Common myeloid progenitor, CD34-positive (primary cell): ENCODE measurements at regions of chr2 and their contacts with region 1.

Region 1: DNA sequence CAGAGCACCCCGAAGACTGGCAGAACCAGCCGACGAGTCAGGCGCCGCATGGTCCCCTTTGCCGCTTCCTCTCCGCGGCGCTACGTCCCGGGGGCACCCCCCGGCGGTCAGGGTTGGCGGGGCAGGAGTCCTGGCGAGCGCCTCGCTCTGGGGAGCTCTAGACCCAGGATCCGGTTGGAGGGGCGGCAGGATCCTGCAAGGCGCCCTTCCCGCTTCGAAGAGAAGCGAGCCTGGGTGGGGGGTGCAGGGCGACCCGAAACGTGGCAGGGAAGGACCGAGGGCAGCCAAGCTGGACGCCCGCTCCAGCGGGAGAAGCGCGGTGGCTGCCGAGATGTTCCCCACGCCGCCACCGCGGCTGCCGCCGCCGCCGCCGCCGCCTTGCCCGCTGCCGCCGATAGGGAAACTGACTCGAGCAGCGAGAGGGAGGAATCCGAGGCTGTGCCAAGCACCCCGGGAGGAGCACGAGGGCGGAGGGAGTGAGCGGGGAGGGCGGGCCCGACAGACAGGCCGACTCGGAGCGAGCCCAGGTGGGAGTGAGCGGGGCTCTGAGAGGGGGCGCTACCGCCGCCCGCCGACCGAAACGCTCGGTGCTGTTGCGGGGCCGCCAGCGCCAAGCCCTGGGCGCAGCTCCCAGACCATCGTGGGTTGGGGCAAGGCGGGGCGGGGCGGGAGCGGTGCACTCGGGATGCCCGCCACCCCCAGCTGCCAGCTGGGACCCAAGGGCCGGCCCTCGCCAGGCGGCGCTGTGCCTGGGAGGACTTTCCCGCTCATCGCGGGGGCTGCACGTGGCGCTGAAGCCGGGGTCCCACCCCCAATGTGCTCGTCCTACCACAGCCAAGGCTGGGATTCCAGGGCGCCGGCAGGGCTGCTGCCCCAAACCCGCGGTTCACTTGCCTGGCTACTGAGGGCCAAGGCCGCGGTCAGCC is at the start of gene GALNT14:
- DNase-seq: peak; percentile 66 to 85 (median 76)
- H3K4me3 ChIP-seq: peak within 1 kb of the TSS; percentile 44 to 81 (median 71)
- H3K27ac ChIP-seq: no peak within 1 kb of the TSS
- H3K4me1 ChIP-seq: peaks cover 4 to 25% (median 22%) of the 10 kb centered on the region in 4 experiments
- H3K27me3 ChIP-seq: peaks cover 0 to 23% (median 0%) of the 10 kb centered on the region in 5 experiments

Region 2: GRCh38 chr2:30736461-30737325 is 401.6 kb before region 1 on chr2:
- CTCF ChIA-PET with region 1: no interaction called
- POLR2A ChIA-PET with region 1: no interaction called
- DNase-seq: no peak
- H3K4me3 ChIP-seq: no peak overlapping the region
- H3K27ac ChIP-seq: no peak overlapping the region
- H3K4me1 ChIP-seq: no peaks in the 10 kb centered on the region
- H3K27me3 ChIP-seq: peaks cover 0 to 23% (median 1%) of the 10 kb centered on the region in 5 experiments

Region 3: GRCh38 chr2:31060397-31060796 is 77.9 kb before region 1 on chr2:
- CTCF ChIA-PET with region 1: no interaction called
- POLR2A ChIA-PET with region 1: no interaction called
- DNase-seq: no peak
- H3K4me3 ChIP-seq: no peak overlapping the region
- H3K27ac ChIP-seq: no peak overlapping the region
- H3K4me1 ChIP-seq: peaks cover 0 to 2% (median 0%) of the 10 kb centered on the region in 4 experiments
- H3K27me3 ChIP-seq: no peaks in the 10 kb centered on the region

Region 4: DNA sequence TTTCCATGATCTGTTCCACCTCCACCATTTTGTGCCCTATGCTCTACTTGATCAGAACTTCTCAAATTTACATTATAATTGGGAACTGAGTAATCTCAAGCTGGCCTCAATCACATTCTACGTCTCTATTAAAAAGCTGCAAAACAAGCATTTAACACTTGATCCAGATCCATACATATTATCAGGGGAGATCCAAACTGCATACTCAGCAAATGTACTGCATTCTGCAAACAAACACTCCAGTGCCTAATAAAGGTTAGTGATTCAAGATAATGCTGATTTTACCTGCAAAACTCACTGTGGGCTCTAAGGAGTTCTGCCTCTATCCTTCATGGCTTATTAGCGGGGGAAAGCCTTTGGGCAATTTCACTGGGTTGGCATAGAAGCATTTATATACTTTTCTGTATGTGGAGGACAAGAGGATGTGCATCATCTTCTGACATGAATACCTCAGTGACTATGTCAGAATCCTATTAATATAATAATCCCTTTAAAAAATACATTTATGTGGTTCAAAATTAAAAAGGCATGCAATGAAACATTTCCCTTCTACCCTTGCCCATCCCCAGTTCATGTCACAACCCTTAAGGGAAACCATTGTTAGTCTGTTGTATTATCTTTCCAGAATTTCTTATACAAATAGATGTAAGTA is 40.2 kb before region 1 on chr2:
- CTCF ChIA-PET with region 1: no interaction called
- POLR2A ChIA-PET with region 1: no interaction called
- DNase-seq: no peak
- H3K4me3 ChIP-seq: no peak overlapping the region
- H3K27ac ChIP-seq: no peak overlapping the region
- H3K4me1 ChIP-seq: no peaks in the 10 kb centered on the region
- H3K27me3 ChIP-seq: no peaks in the 10 kb centered on the region

Region 5: GRCh38 chr2:31151501-31151900 is 13.2 kb after region 1 on chr2:
- CTCF ChIA-PET with region 1: interaction called, 14 read pairs
- POLR2A ChIA-PET with region 1: no interaction called
- DNase-seq: no peak
- H3K4me3 ChIP-seq: no peak overlapping the region
- H3K27ac ChIP-seq: no peak overlapping the region
- H3K4me1 ChIP-seq: no peaks in the 10 kb centered on the region
- H3K27me3 ChIP-seq: peaks cover 0 to 4% (median 0%) of the 10 kb centered on the region in 5 experiments